ENCODE measurements at regions of chr14 and their contacts with region 1.

Region 1: GRCh38 chr14:31003284-31003683 is 22.2 kb upstream of the AP4S1 start:
- DNase-seq: no peak
- ATAC-seq: no peak
- H3K4me3 ChIP-seq: no peak overlapping the region
- H3K27ac ChIP-seq: no peak overlapping the region
- H3K4me1 ChIP-seq: 0 out of 2 replicates have a peak, but pooled peaks cover 2% of the 10 kb centered on the region
- H3K27me3 ChIP-seq: no peaks in the 10 kb centered on the region
- CTCF ChIP-seq: no peak
- POLR2A ChIP-seq: no peak
- RAD21 ChIP-seq: no peak

Region 2: DNA sequence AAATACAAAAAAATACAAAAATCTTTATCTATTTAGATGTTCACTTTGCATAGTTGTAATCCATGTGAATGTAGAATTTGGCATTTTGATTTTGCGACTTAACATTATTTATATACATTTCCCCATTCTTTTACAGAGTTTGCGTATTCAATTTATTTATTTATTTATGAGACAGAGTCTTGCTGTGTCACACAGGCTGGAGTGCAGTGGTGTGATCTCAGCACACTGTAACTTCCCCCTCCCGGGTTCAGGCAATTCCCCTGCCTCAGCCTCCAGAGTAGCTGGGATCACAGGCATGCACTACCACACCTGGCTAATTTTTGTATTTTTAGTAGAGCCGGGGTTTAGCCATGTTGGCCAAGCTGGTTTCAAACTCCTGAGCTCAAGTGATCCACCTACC is 48.2 kb after region 1 on chr14:
- CTCF ChIA-PET with region 1: no interaction called
- POLR2A ChIA-PET with region 1: interaction called, 13 read pairs
- dilution Hi-C with region 1: no loop called
- in situ Hi-C with region 1: no loop called
- intact Hi-C with region 1: no loop called
- DNase-seq: peak; percentile 34
- ATAC-seq: peak; percentile 57
- H3K4me3 ChIP-seq: no peak overlapping the region
- H3K27ac ChIP-seq: no peak overlapping the region
- H3K4me1 ChIP-seq: no peaks in the 10 kb centered on the region; the same call in none of the 2 replicates
- H3K27me3 ChIP-seq: no peaks in the 10 kb centered on the region
- CTCF ChIP-seq: no peak
- POLR2A ChIP-seq: no peak
- RAD21 ChIP-seq: no peak